Activated CD4-positive, alpha-beta memory T cell treated with anti-CD3 and anti-CD28 coated beads for 36 hours (primary cell): ENCODE measurements at regions of chr6 and their contacts with region 1.

Region 1: GRCh38 chr6:45737331-45738056 is 278.2 kb downstream of the CLIC5 start:
- DNase-seq: peak; percentile 24
- H3K4me3 Mint-ChIP-seq: peak overlapping the region; percentile 10
- H3K27ac Mint-ChIP-seq: peak overlapping the region; percentile 75
- H3K4me1 Mint-ChIP-seq: peaks cover 59% of the 10 kb centered on the region
- H3K27me3 Mint-ChIP-seq: peaks cover 8% of the 10 kb centered on the region

Region 2: GRCh38 chr6:45791211-45792168 is 54.0 kb after region 1 on chr6:
- CTCF ChIA-PET with region 1: no interaction called
- POLR2A ChIA-PET with region 1: interaction called, 3 read pairs
- intact Hi-C with region 1: loop called (anchors 1 kb)
- DNase-seq: no peak
- H3K4me3 Mint-ChIP-seq: no peak overlapping the region
- H3K27ac Mint-ChIP-seq: peak overlapping the region; percentile 76
- H3K4me1 Mint-ChIP-seq: peaks cover 26% of the 10 kb centered on the region
- H3K27me3 Mint-ChIP-seq: peaks cover 2% of the 10 kb centered on the region

Region 3: GRCh38 chr6:45822246-45822812 is 84.8 kb after region 1 on chr6:
- CTCF ChIA-PET with region 1: no interaction called
- POLR2A ChIA-PET with region 1: interaction called, 5 read pairs
- intact Hi-C with region 1: loop called (anchors 2 kb)
- DNase-seq: peak; percentile 67
- H3K4me3 Mint-ChIP-seq: peak overlapping the region; percentile 47
- H3K27ac Mint-ChIP-seq: peak overlapping the region; percentile 89
- H3K4me1 Mint-ChIP-seq: peaks cover 50% of the 10 kb centered on the region
- H3K27me3 Mint-ChIP-seq: peaks cover 3% of the 10 kb centered on the region